ACHN (cell line): ENCODE measurements at regions of chr2 and their contacts with region 1.

Region 1: DNA sequence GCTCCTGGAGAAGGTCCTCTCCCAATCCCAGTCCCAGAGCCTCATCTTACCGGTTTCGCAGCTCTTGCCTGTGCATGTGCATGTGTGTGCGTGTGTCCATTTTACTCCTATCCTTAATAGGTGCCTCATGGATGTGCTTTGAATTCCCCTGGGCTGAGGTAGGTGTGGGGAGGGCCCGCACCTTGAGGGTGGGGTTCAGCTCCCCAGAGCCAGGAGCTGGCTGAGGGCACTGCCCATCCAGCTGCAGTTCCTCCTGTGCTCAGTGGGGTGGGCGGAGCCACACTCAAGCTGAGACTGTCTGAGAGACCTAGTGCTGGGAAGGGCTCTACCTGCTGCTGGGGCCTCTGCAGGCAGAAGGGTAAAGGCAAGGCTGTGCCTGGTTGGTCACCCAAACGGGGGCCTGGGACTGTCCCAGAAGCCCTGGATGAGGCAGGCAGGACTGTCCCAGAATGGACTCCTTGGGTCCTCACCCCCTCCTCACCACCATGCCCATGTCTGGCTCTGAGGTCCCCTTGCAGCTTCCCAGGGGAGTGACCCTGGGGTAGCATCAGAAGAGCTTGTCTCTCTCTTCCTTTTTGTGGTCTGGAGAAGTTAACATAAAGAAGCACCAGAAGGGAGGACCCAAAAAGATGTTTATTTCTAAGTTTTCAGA is 8.9 kb downstream of the GDF7 start:
- DNase-seq: peak; percentile 64

Region 2: GRCh38 chr2:20925265-20925889 is 249.6 kb after region 1 on chr2:
- in situ Hi-C with region 1: loop called (anchors 25 kb)
- DNase-seq: peak; percentile 39